MCF 10A (cell line): ENCODE measurements at regions of chr2 and their contacts with region 1.

Region 1: GRCh38 chr2:85911814-85912692 is 23.3 kb upstream of the ST3GAL5 start:
- DNase-seq: peak; percentile 91
- H3K4me3 Mint-ChIP-seq: no peak overlapping the region
- H3K27ac Mint-ChIP-seq: peak overlapping the region; percentile 97
- H3K4me1 Mint-ChIP-seq: peaks cover 52% of the 10 kb centered on the region
- H3K27me3 Mint-ChIP-seq: no peaks in the 10 kb centered on the region
- CTCF ChIP-seq: no peak

Region 2: GRCh38 chr2:85930129-85931124 is 18.4 kb after region 1 on chr2:
- CTCF ChIA-PET with region 1: no interaction called
- POLR2A ChIA-PET with region 1: interaction called, 10 read pairs
- intact Hi-C with region 1: no loop called
- DNase-seq: peak; percentile 66
- H3K4me3 Mint-ChIP-seq: no peak overlapping the region
- H3K27ac Mint-ChIP-seq: peak overlapping the region; percentile 73
- H3K4me1 Mint-ChIP-seq: peaks cover 43% of the 10 kb centered on the region
- H3K27me3 Mint-ChIP-seq: no peaks in the 10 kb centered on the region
- CTCF ChIP-seq: no peak